CD4-positive, alpha-beta T cell (primary cell): ENCODE measurements at regions of chrX and their contacts with region 1.

Region 1: GRCh38 chrX:71365876-71366673 is at the start of gene TAF1:
- DNase-seq: peak; percentile 78 to 97 (median 87)
- ATAC-seq: peak; percentile 86
- H3K4me3 ChIP-seq: peak within 1 kb of the TSS; percentile 92
- H3K4me3 Mint-ChIP-seq: peak within 1 kb of the TSS; percentile 98
- H3K27ac ChIP-seq: peak within 1 kb of the TSS; percentile 85 to 90
- H3K27ac Mint-ChIP-seq: peak within 1 kb of the TSS; percentile 97
- H3K4me1 ChIP-seq: peaks cover 34% of the 10 kb centered on the region
- H3K4me1 Mint-ChIP-seq: peaks cover 28% of the 10 kb centered on the region
- H3K27me3 ChIP-seq: no peaks in the 10 kb centered on the region
- H3K27me3 Mint-ChIP-seq: no peaks in the 10 kb centered on the region
- CTCF ChIP-seq: no peak
- total RNA-seq, gene TAF1: 61.0 to 62.2 TPM

Region 2: GRCh38 chrX:70133303-70134115 is 1232.6 kb before region 1 on chrX and contains the start of gene IGBP1:
- CTCF ChIA-PET with region 1: no interaction called
- POLR2A ChIA-PET with region 1: interaction called, 6 read pairs
- intact Hi-C with region 1: loop called in 1 of 2 experiments (anchors 10 kb)
- DNase-seq: peak; percentile 54 to 94 (median 67)
- ATAC-seq: peak; percentile 81
- H3K4me3 ChIP-seq: peak within 1 kb of the TSS; percentile 77
- H3K4me3 Mint-ChIP-seq: peak within 1 kb of the TSS; percentile 89
- H3K27ac ChIP-seq: peak within 1 kb of the TSS; percentile 79 to 94
- H3K27ac Mint-ChIP-seq: peak within 1 kb of the TSS; percentile 87
- H3K4me1 ChIP-seq: peaks cover 23% of the 10 kb centered on the region
- H3K4me1 Mint-ChIP-seq: peaks cover 37% of the 10 kb centered on the region
- H3K27me3 ChIP-seq: no peaks in the 10 kb centered on the region
- H3K27me3 Mint-ChIP-seq: no peaks in the 10 kb centered on the region
- CTCF ChIP-seq: peak; percentile 51
- total RNA-seq, gene IGBP1: 63.7 to 64.4 TPM

Region 3: GRCh38 chrX:70901465-70901864 is 464.6 kb before region 1 on chrX:
- CTCF ChIA-PET with region 1: no interaction called
- POLR2A ChIA-PET with region 1: no interaction called
- intact Hi-C with region 1: no loop called
- DNase-seq: no peak
- ATAC-seq: no peak
- H3K4me3 ChIP-seq: no peak overlapping the region
- H3K4me3 Mint-ChIP-seq: no peak overlapping the region
- H3K27ac ChIP-seq: no peak overlapping the region
- H3K27ac Mint-ChIP-seq: no peak overlapping the region
- H3K4me1 ChIP-seq: no peaks in the 10 kb centered on the region
- H3K4me1 Mint-ChIP-seq: no peaks in the 10 kb centered on the region
- H3K27me3 ChIP-seq: no peaks in the 10 kb centered on the region
- H3K27me3 Mint-ChIP-seq: no peaks in the 10 kb centered on the region
- CTCF ChIP-seq: no peak

Region 4: GRCh38 chrX:71068049-71068763 is 297.9 kb before region 1 on chrX and contains the start of gene SNX12:
- CTCF ChIA-PET with region 1: no interaction called
- POLR2A ChIA-PET with region 1: interaction called, 13 read pairs
- intact Hi-C with region 1: loop called (anchors 1 to 5 kb)
- DNase-seq: peak; percentile 73 to 95 (median 84)
- ATAC-seq: peak; percentile 91
- H3K4me3 ChIP-seq: peak within 1 kb of the TSS; percentile 73
- H3K4me3 Mint-ChIP-seq: peak within 1 kb of the TSS; percentile 98
- H3K27ac ChIP-seq: peak within 1 kb of the TSS; percentile 77 to 89
- H3K27ac Mint-ChIP-seq: peak within 1 kb of the TSS; percentile 100
- H3K4me1 ChIP-seq: peaks cover 10% of the 10 kb centered on the region
- H3K4me1 Mint-ChIP-seq: peaks cover 28% of the 10 kb centered on the region
- H3K27me3 ChIP-seq: no peaks in the 10 kb centered on the region
- H3K27me3 Mint-ChIP-seq: no peaks in the 10 kb centered on the region
- CTCF ChIP-seq: no peak
- total RNA-seq, gene SNX12: 20.5 to 22.4 TPM

Region 5: GRCh38 chrX:71118032-71118984 is 247.8 kb before region 1 on chrX and contains the start of gene MED12:
- CTCF ChIA-PET with region 1: no interaction called
- POLR2A ChIA-PET with region 1: interaction called, 17 read pairs
- intact Hi-C with region 1: loop called in 1 of 2 experiments (anchors 5 kb)
- DNase-seq: peak; percentile 63 to 89 (median 76)
- ATAC-seq: peak; percentile 95
- H3K4me3 ChIP-seq: peak within 1 kb of the TSS; percentile 83
- H3K4me3 Mint-ChIP-seq: peak within 1 kb of the TSS; percentile 93
- H3K27ac ChIP-seq: peak within 1 kb of the TSS; percentile 77 to 86
- H3K27ac Mint-ChIP-seq: peak within 1 kb of the TSS; percentile 94
- H3K4me1 ChIP-seq: peaks cover 40% of the 10 kb centered on the region
- H3K4me1 Mint-ChIP-seq: peaks cover 36% of the 10 kb centered on the region
- H3K27me3 ChIP-seq: no peaks in the 10 kb centered on the region
- H3K27me3 Mint-ChIP-seq: no peaks in the 10 kb centered on the region
- CTCF ChIP-seq: no peak
- total RNA-seq, gene MED12: 44.5 to 55.3 TPM

Region 6: GRCh38 chrX:71159335-71159734 is 206.7 kb before region 1 on chrX:
- CTCF ChIA-PET with region 1: no interaction called
- POLR2A ChIA-PET with region 1: no interaction called
- intact Hi-C with region 1: no loop called
- DNase-seq: peak in 2 of 14 experiments; percentile 22 to 35
- ATAC-seq: peak; percentile 69
- H3K4me3 ChIP-seq: no peak overlapping the region
- H3K4me3 Mint-ChIP-seq: no peak overlapping the region
- H3K27ac ChIP-seq: no peak overlapping the region
- H3K27ac Mint-ChIP-seq: peak overlapping the region; percentile 19
- H3K4me1 ChIP-seq: peaks cover 7% of the 10 kb centered on the region
- H3K4me1 Mint-ChIP-seq: peaks cover 11% of the 10 kb centered on the region
- H3K27me3 ChIP-seq: no peaks in the 10 kb centered on the region
- H3K27me3 Mint-ChIP-seq: no peaks in the 10 kb centered on the region
- CTCF ChIP-seq: no peak

Region 7: DNA sequence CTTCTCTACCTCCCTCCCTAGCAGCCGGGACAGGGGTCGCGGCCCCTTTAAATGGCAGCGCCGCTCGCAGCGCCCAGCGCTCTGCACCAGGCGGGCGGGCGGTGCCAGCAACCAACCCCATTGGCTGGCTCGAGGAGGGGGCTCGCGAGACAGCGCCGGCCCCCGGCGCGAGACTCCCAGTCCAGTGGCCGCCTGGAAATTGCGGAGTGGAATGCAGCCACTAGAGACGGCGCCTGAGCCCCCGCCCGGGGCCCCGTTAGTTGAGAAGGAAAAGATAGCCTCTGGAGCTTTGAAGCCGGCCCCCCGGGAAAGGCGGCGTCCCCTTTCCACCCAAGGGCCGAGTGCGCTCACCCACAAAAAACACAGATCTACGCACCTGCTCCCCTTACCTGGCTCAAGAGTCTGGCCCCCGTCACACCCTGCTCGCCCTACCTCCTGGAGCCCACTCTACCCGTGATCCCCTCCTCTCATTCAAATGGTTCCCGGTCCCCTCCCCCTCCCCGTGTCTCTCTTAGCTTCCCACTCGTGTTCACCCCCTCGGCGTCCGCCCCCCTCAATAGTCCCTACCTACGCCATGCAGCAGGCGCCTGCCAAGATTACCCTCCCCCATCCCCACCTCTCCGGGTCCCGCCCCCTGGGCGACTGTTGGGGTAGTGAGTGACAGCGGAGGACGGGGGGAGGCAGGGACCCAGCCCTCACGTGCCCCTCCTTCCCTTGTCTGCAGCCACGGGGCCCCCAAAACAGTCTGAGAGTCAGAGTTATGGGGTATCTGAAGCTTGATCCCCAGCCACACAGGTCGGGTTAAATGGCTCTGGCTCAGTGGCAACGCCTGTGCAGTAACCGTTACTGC is 111.8 kb before region 1 on chrX and contains the start of gene ZMYM3:
- CTCF ChIA-PET with region 1: no interaction called
- POLR2A ChIA-PET with region 1: interaction called, 77 read pairs
- intact Hi-C with region 1: loop called (anchors 2 to 10 kb)
- DNase-seq: peak; percentile 59 to 87 (median 75)
- ATAC-seq: peak; percentile 75
- H3K4me3 ChIP-seq: peak within 1 kb of the TSS; percentile 85
- H3K4me3 Mint-ChIP-seq: peak within 1 kb of the TSS; percentile 95
- H3K27ac ChIP-seq: peak within 1 kb of the TSS; percentile 72 to 84
- H3K27ac Mint-ChIP-seq: peak within 1 kb of the TSS; percentile 93
- H3K4me1 ChIP-seq: peaks cover 27% of the 10 kb centered on the region
- H3K4me1 Mint-ChIP-seq: peaks cover 29% of the 10 kb centered on the region
- H3K27me3 ChIP-seq: no peaks in the 10 kb centered on the region
- H3K27me3 Mint-ChIP-seq: no peaks in the 10 kb centered on the region
- CTCF ChIP-seq: no peak
- total RNA-seq, gene ZMYM3: 16.7 to 17.6 TPM

Region 8: DNA sequence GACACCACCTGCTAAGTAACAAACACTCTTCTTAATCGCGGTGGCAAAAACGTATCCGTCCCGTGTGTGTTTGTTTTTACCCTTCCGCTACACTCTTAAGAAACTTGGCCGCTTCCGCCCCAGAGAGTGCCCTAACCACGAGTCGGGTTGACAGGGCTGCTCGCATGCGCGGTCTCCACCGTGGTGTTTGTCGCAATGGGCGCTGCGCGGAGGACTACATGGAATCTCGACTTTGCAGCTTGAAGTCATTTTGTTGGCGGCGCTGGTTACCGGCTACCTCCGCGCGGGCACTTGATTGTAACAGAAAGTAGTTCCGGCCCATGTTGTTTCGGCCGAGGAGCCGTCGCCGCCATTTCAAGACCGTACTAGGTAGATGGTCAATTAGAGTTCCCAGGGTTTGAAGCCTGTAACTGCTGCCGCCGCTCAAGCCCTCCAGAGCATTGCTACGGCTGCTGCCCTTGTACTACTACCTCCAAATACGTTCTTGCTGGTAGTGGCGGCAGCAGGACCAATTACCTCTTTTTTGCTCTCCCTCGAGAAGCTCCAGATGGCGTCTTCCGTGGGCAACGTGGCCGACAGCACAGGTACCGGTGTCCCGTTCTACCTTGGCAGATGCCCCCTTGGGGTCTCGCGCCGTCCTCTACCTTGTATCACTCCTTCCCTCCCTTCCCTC is 166.8 kb after region 1 on chrX and contains the start of gene OGT:
- CTCF ChIA-PET with region 1: no interaction called
- POLR2A ChIA-PET with region 1: interaction called, 84 read pairs
- intact Hi-C with region 1: loop called (anchors 5 kb)
- DNase-seq: peak; percentile 85 to 98 (median 92)
- ATAC-seq: peak; percentile 72
- H3K4me3 ChIP-seq: peak within 1 kb of the TSS; percentile 97
- H3K4me3 Mint-ChIP-seq: peak within 1 kb of the TSS; percentile 99
- H3K27ac ChIP-seq: peak within 1 kb of the TSS; percentile 87 to 93
- H3K27ac Mint-ChIP-seq: peak within 1 kb of the TSS; percentile 98
- H3K4me1 ChIP-seq: peaks cover 21% of the 10 kb centered on the region
- H3K4me1 Mint-ChIP-seq: peaks cover 36% of the 10 kb centered on the region
- H3K27me3 ChIP-seq: no peaks in the 10 kb centered on the region
- H3K27me3 Mint-ChIP-seq: no peaks in the 10 kb centered on the region
- CTCF ChIP-seq: no peak
- total RNA-seq, gene OGT: 279 to 295 TPM